Activated naive CD8-positive, alpha-beta T cell treated with anti-CD3 and anti-CD28 coated beads, Interleukin-2, amount 10 ng/mL, durations not matched to agents 7 days and 5 days (primary cell): ENCODE measurements at regions of chr5 and their contacts with region 1.

Region 1: DNA sequence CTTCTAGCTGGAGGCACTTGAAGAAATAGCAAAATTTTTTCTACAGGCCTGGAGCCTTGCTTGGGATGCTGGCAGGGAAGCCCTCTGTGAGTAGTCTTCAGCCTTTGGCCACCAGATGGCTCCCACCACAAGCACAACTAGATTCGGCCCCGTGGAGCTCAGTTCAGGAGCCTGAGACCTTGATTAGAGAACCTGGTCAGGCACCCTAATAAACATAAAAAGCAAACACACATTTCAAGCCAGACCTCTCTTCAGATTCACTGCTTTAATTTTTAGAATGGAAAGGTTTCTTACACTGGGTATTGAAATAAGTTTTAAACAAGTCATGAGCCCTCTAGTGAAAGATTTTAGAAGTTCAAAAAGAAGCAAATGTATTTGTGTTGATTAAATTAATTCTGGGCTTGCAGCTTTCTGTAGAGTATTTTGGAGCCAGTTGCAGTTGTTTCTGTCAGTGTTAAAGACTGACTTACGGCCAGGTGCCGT is 41.4 kb downstream of the GLRX start:
- DNase-seq: peak; percentile 64
- ATAC-seq: peak; percentile 92
- H3K4me3 Mint-ChIP-seq: peak overlapping the region; percentile 48
- H3K27ac Mint-ChIP-seq: peak overlapping the region; percentile 45
- H3K4me1 Mint-ChIP-seq: peaks cover 26% of the 10 kb centered on the region
- H3K27me3 Mint-ChIP-seq: no peaks in the 10 kb centered on the region

Region 2: DNA sequence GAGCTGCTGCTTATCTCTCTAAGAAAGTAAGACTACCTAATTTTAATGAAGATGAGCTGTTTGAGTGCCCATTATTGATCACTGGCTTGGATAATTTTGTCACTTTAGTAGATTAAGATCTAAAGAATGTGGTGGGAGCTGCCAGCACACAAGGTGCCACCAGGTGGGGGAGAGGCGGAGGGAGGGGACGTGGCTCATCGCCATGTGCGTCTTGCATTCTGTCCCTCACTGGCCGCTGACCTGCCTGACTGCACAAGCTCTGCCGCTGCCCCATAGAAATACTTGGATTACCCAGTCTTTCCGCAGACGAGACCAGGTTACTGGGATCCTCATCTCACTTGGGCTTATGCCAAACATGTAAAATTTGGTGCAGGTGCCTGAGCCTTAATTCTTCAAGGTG is 12.4 kb before region 1 on chr5:
- POLR2A ChIA-PET with region 1: interaction called, 10 read pairs
- DNase-seq: no peak
- ATAC-seq: no peak
- H3K4me3 Mint-ChIP-seq: no peak overlapping the region
- H3K27ac Mint-ChIP-seq: no peak overlapping the region
- H3K4me1 Mint-ChIP-seq: peaks cover 6% of the 10 kb centered on the region
- H3K27me3 Mint-ChIP-seq: peaks cover 21% of the 10 kb centered on the region

Region 3: GRCh38 chr5:95822542-95823181 is 41.5 kb after region 1 on chr5 and contains the start of gene GLRX:
- POLR2A ChIA-PET with region 1: interaction called, 10 read pairs
- DNase-seq: peak; percentile 63
- ATAC-seq: peak; percentile 32
- H3K4me3 Mint-ChIP-seq: peak within 1 kb of the TSS; percentile 98
- H3K27ac Mint-ChIP-seq: peak within 1 kb of the TSS; percentile 93
- H3K4me1 Mint-ChIP-seq: peaks cover 62% of the 10 kb centered on the region
- H3K27me3 Mint-ChIP-seq: no peaks in the 10 kb centered on the region
- total RNA-seq, gene GLRX: 70.6 to 72.9 TPM

Region 4: GRCh38 chr5:95842854-95843544 is 61.9 kb after region 1 on chr5:
- POLR2A ChIA-PET with region 1: interaction called, 14 read pairs
- DNase-seq: peak; percentile 59
- ATAC-seq: peak; percentile 80
- H3K4me3 Mint-ChIP-seq: peak overlapping the region; percentile 49
- H3K27ac Mint-ChIP-seq: peak overlapping the region; percentile 76
- H3K4me1 Mint-ChIP-seq: peaks cover 27% of the 10 kb centered on the region
- H3K27me3 Mint-ChIP-seq: peaks cover 2% of the 10 kb centered on the region